Activated B cell treated with CpG ODN at 0.5 μM for 24 hours (primary cell): ENCODE measurements at regions of chr12 and their contacts with region 1.

Region 1: GRCh38 chr12:124567661-124568373 is 405 bp upstream of the NCOR2 start:
- DNase-seq: peak; percentile 74
- ATAC-seq: peak; percentile 66
- H3K4me3 Mint-ChIP-seq: peak overlapping the region; percentile 82
- H3K27ac Mint-ChIP-seq: peak overlapping the region; percentile 84
- H3K4me1 Mint-ChIP-seq: peaks cover 44% of the 10 kb centered on the region
- H3K27me3 Mint-ChIP-seq: no peaks in the 10 kb centered on the region
- CTCF ChIP-seq: no peak

Region 2: GRCh38 chr12:123972457-123973401 is 595.1 kb before region 1 on chr12 and contains the starts of genes CCDC92 and ZNF664:
- CTCF ChIA-PET with region 1: no interaction called
- POLR2A ChIA-PET with region 1: no interaction called
- intact Hi-C with region 1: loop called (anchors 5 kb)
- DNase-seq: peak; percentile 98
- ATAC-seq: peak; percentile 84
- H3K4me3 Mint-ChIP-seq: peak within 1 kb of the TSS; percentile 92
- H3K27ac Mint-ChIP-seq: peak within 1 kb of the TSS; percentile 88
- H3K4me1 Mint-ChIP-seq: peaks cover 15% of the 10 kb centered on the region
- H3K27me3 Mint-ChIP-seq: no peaks in the 10 kb centered on the region
- CTCF ChIP-seq: no peak
- total RNA-seq, gene CCDC92: 21.5 and 23.7 TPM in 2 replicates
- total RNA-seq, gene ZNF664: 35.6 and 40.7 TPM in 2 replicates

Region 3: GRCh38 chr12:124493809-124494750 is 73.7 kb before region 1 on chr12:
- CTCF ChIA-PET with region 1: no interaction called
- POLR2A ChIA-PET with region 1: interaction called, 3 read pairs
- intact Hi-C with region 1: loop called (anchors 1 kb)
- DNase-seq: peak; percentile 59
- ATAC-seq: peak; percentile 96
- H3K4me3 Mint-ChIP-seq: peak overlapping the region; percentile 76
- H3K27ac Mint-ChIP-seq: peak overlapping the region; percentile 83
- H3K4me1 Mint-ChIP-seq: peaks cover 69% of the 10 kb centered on the region
- H3K27me3 Mint-ChIP-seq: no peaks in the 10 kb centered on the region
- CTCF ChIP-seq: no peak

Region 4: DNA sequence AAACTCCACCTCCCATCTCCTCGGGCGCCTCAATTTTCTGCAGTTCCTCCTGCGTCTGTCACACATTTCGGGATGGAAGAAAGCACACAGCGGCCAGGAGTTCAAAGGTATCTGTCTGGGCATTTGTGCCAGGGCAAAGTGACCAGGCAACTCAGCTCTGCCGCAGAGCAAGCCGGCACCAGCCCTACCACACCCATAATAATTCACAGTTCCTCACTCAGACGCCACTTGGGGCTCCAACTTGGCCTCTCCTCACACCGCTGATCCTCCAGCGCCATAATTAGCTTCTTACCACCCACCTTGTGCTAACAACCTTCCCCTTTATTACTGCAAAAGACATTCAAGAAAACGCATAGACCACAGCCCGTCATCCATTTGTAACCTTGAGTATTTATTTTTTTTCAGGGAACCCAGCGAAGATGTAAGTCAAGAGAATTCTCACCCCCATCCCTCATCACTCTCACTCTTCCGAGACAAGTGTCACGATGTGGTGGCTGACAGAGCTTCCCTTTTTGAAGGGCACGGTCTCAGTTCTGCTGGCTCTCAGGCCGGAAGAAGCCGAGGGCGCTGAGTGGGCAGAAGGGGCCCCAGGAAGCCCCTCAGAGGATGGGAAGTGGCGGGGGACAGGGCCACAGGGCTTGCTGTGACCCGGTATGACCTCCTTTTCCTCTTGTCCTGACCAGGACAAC is 24.8 kb after region 1 on chr12:
- CTCF ChIA-PET with region 1: no interaction called
- POLR2A ChIA-PET with region 1: interaction called, 3 read pairs
- intact Hi-C with region 1: loop called (anchors 1 kb)
- DNase-seq: peak; percentile 30
- ATAC-seq: peak; percentile 90
- H3K4me3 Mint-ChIP-seq: peak overlapping the region; percentile 54
- H3K27ac Mint-ChIP-seq: peak overlapping the region; percentile 72
- H3K4me1 Mint-ChIP-seq: peaks cover 36% of the 10 kb centered on the region
- H3K27me3 Mint-ChIP-seq: peaks cover 2% of the 10 kb centered on the region
- CTCF ChIP-seq: no peak

Region 5: GRCh38 chr12:124767066-124767821 is 199.4 kb after region 1 on chr12:
- CTCF ChIA-PET with region 1: interaction called, 3 read pairs
- POLR2A ChIA-PET with region 1: no interaction called
- intact Hi-C with region 1: loop called (anchors 1 kb)
- DNase-seq: peak; percentile 82
- ATAC-seq: peak; percentile 86
- H3K4me3 Mint-ChIP-seq: no peak overlapping the region
- H3K27ac Mint-ChIP-seq: peak overlapping the region; percentile 72
- H3K4me1 Mint-ChIP-seq: peaks cover 15% of the 10 kb centered on the region
- H3K27me3 Mint-ChIP-seq: peaks cover 9% of the 10 kb centered on the region
- CTCF ChIP-seq: peak; percentile 85

Region 6: DNA sequence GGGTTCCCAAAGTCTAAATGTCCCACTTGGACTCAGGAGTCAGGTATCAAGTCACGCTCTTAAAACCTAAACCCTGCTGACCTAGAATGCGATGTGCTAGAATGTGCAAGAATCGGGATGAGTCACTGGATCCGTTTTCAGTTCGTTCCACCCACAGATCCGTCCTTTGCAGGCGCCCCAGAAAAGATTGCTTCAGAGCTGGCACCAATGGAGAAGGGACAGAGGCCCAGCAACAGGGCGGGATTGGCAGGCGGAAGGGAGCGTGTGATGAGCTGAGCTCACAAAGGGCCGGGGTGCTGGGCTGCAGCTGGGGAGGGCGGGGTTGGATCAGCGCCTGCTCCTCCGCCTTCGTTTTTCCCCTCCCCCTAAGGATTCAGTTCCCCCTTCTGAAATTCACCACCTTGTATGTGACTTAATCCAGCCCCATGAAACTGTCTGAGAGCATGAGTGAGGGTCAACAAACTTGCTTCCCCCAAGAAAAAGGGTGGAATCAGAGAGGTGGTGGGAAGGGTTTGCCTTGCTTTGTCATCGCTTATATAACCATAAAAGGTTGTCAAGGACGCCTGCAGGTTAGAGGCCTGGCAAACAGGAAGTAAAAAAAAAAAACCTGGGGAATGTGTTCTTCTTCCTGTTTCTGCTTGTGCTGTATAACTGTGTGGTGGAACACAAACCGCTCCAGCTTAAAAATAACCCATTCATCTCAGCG is 349.5 kb after region 1 on chr12:
- CTCF ChIA-PET with region 1: no interaction called
- POLR2A ChIA-PET with region 1: no interaction called
- intact Hi-C with region 1: loop called (anchors 5 kb)
- DNase-seq: peak; percentile 77
- ATAC-seq: peak; percentile 63
- H3K4me3 Mint-ChIP-seq: peak overlapping the region; percentile 100
- H3K27ac Mint-ChIP-seq: peak overlapping the region; percentile 100
- H3K4me1 Mint-ChIP-seq: peaks cover 91% of the 10 kb centered on the region
- H3K27me3 Mint-ChIP-seq: no peaks in the 10 kb centered on the region
- CTCF ChIP-seq: no peak

Region 7: GRCh38 chr12:125314051-125314755 is 746.4 kb after region 1 on chr12:
- CTCF ChIA-PET with region 1: no interaction called
- POLR2A ChIA-PET with region 1: no interaction called
- intact Hi-C with region 1: no loop called
- DNase-seq: no peak
- ATAC-seq: no peak
- H3K4me3 Mint-ChIP-seq: no peak overlapping the region
- H3K27ac Mint-ChIP-seq: no peak overlapping the region
- H3K4me1 Mint-ChIP-seq: no peaks in the 10 kb centered on the region
- H3K27me3 Mint-ChIP-seq: peaks cover 10% of the 10 kb centered on the region
- CTCF ChIP-seq: no peak